ENCODE measurements at regions of chr16 and their contacts with region 1.

Region 1: GRCh38 chr16:9090960-9091866 is at the start of gene HAPSTR1:
- DNase-seq: peak; percentile 100
- ATAC-seq: peak; percentile 93
- H3K4me3 ChIP-seq: peak within 1 kb of the TSS; percentile 66 to 92
- H3K27ac ChIP-seq: peak within 1 kb of the TSS; percentile 91
- H3K4me1 ChIP-seq: peaks cover 29 to 64% of the 10 kb centered on the region in 2 experiments
- H3K27me3 ChIP-seq: no peaks in the 10 kb centered on the region
- CTCF ChIP-seq: no peak
- POLR2A ChIP-seq: peak; percentile 94
- RAD21 ChIP-seq: no peak
- total RNA-seq, gene HAPSTR1: 54.9 TPM

Region 2: GRCh38 chr16:9047686-9048301 is 43.4 kb before region 1 on chr16:
- CTCF ChIA-PET with region 1: interaction called, 3 read pairs
- POLR2A ChIA-PET with region 1: interaction called, 10 read pairs
- RAD21 ChIA-PET with region 1: interaction called in 1 of 2 experiments, 7 read pairs
- intact Hi-C with region 1: no loop called
- DNase-seq: peak; percentile 98
- ATAC-seq: peak; percentile 92
- H3K4me3 ChIP-seq: peak overlapping the region in 1 of 2 experiments; percentile 43; a peak in 2 of 4 replicates
- H3K27ac ChIP-seq: peak overlapping the region; percentile 83
- H3K4me1 ChIP-seq: peaks cover 41 to 48% of the 10 kb centered on the region in 2 experiments
- H3K27me3 ChIP-seq: no peaks in the 10 kb centered on the region
- CTCF ChIP-seq: no peak
- POLR2A ChIP-seq: no peak
- RAD21 ChIP-seq: peak; percentile 37; the same call in 1 of the 2 replicates

Region 3: GRCh38 chr16:9068886-9069285 is 22.3 kb before region 1 on chr16:
- CTCF ChIA-PET with region 1: interaction called, 3 read pairs
- POLR2A ChIA-PET with region 1: interaction called, 25 read pairs
- RAD21 ChIA-PET with region 1: no interaction called
- intact Hi-C with region 1: no loop called
- DNase-seq: no peak
- ATAC-seq: no peak
- H3K4me3 ChIP-seq: peak overlapping the region; percentile 41 to 66; a peak in 3 of 4 replicates
- H3K27ac ChIP-seq: peak overlapping the region; percentile 86; the same call in 1 of the 2 replicates
- H3K4me1 ChIP-seq: peaks cover 7 to 43% of the 10 kb centered on the region in 2 experiments; a peak in 3 of 4 replicates
- H3K27me3 ChIP-seq: no peaks in the 10 kb centered on the region
- CTCF ChIP-seq: no peak
- POLR2A ChIP-seq: no peak
- RAD21 ChIP-seq: no peak

Region 4: GRCh38 chr16:9077091-9077809 is 14.0 kb before region 1 on chr16:
- CTCF ChIA-PET with region 1: interaction called, 5 read pairs
- POLR2A ChIA-PET with region 1: interaction called, 183 read pairs
- RAD21 ChIA-PET with region 1: interaction called, 3 read pairs
- intact Hi-C with region 1: loop called (anchors 1 kb)
- DNase-seq: peak; percentile 47
- ATAC-seq: peak; percentile 63
- H3K4me3 ChIP-seq: peak overlapping the region in 1 of 2 experiments; percentile 12; a peak in 1 of 4 replicates
- H3K27ac ChIP-seq: peak overlapping the region; percentile 74
- H3K4me1 ChIP-seq: peaks cover 33 to 74% of the 10 kb centered on the region in 2 experiments
- H3K27me3 ChIP-seq: no peaks in the 10 kb centered on the region
- CTCF ChIP-seq: no peak
- POLR2A ChIP-seq: no peak
- RAD21 ChIP-seq: 0 out of 2 replicates have a peak, but pooled peaks have one; percentile 35